HCT116 (cell line): ENCODE measurements at regions of chr16 and their contacts with region 1.

Region 1: DNA sequence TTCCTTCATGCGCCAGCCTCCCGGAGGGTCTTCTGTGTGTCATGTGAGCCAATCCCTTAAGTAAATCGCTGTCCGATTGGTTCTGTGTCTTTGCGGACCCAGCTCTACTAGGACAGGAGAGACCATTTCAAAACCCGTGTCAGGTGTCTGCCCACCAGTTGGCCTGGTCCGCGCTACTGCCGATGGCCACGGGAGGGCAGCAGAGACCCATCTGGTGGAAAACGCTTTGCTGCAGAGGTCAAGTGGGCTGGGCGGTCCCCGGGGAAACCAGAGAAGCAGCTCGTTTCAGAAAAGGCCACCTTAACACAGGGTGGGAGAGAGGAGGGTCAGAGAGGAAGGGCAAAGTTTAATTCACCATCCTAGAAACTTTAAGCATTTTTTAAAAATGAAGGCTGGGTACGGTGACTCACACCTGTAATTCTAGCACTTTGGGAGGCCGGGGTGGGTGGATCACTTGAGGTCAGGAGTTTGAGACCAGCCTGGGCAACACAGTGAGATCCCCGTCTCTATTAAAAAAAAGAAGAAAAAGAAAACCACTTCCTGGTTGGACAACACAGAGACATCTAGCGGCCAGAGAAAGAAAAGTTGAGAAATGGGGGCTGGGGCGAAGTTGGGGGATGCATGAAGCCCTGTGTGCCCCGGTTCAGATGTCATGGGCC is 2.8 kb upstream of the CIBAR2 start:
- DNase-seq: peak; percentile 85
- ATAC-seq: peak; percentile 89
- H3K4me3 ChIP-seq: peak overlapping the region; percentile 23 to 27
- H3K27ac ChIP-seq: peak overlapping the region; percentile 48
- H3K4me1 ChIP-seq: peaks cover 11 to 24% of the 10 kb centered on the region in 2 experiments; a peak in 3 of 4 replicates
- H3K27me3 ChIP-seq: no peaks in the 10 kb centered on the region
- CTCF ChIP-seq: peak; percentile 98 to 100 (median 100)
- POLR2A ChIP-seq: no peak
- RAD21 ChIP-seq: peak; percentile 100

Region 2: GRCh38 chr16:84785843-84786581 is 329.0 kb before region 1 on chr16:
- CTCF ChIA-PET with region 1: no interaction called
- POLR2A ChIA-PET with region 1: no interaction called
- RAD21 ChIA-PET with region 1: no interaction called
- intact Hi-C with region 1: no loop called
- DNase-seq: no peak
- ATAC-seq: no peak
- H3K4me3 ChIP-seq: no peak overlapping the region
- H3K27ac ChIP-seq: no peak overlapping the region
- H3K4me1 ChIP-seq: 0 out of 4 replicates have a peak, but pooled peaks cover 0 to 2% of the 10 kb centered on the region in 2 experiments
- H3K27me3 ChIP-seq: no peaks in the 10 kb centered on the region
- CTCF ChIP-seq: no peak
- POLR2A ChIP-seq: no peak
- RAD21 ChIP-seq: no peak

Region 3: DNA sequence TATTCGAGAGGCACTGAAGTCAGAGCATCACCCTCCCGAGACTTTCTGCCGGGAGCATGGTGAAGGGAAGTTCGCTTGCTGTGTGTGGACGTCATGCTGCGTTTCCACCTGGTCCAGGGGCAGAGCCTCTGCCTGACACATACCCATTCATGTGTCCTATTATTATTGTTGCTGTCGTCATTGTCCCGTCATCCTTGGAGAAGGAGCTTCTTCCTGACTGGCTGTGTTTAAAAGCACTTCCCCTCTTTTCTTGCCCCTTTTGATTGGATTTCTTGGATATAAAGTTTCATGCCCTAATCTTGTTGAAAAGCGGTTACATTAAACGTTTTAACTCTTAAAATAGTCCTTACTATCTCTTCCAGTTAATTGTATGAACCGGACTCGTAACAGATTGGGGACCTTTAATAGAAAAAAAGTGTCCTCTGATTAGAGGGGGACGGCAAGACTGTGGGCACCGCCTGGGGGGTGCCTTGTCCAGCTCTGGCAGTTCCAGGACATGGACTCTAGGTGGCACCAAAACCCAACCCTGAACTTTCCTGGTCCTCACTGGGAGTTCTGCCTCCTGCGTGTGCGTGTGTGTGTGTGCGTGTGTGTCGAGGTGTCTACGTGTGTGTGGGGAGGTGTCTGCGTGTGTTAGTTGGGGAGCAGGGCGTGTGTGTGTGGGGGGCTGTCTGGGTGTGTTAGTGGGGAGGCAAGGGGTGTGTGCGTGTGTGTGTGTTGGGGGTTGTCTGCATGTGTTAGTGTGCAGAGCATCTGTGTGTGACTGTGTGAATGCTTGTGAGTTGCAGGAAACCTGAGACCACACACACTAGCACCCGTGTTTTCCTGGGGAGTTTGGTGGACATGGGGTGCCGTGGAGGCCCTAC is 130.5 kb after region 1 on chr16:
- CTCF ChIA-PET with region 1: interaction called, 8 read pairs
- POLR2A ChIA-PET with region 1: interaction called, 3 read pairs
- RAD21 ChIA-PET with region 1: interaction called in 1 of 2 experiments, 3 read pairs
- intact Hi-C with region 1: loop called (anchors 5 kb)
- DNase-seq: peak; percentile 57
- ATAC-seq: peak; percentile 93
- H3K4me3 ChIP-seq: no peak overlapping the region
- H3K27ac ChIP-seq: no peak overlapping the region
- H3K4me1 ChIP-seq: peaks cover 5 to 20% of the 10 kb centered on the region in 2 experiments; a peak in 3 of 4 replicates
- H3K27me3 ChIP-seq: no peaks in the 10 kb centered on the region
- CTCF ChIP-seq: peak; percentile 84 to 99 (median 97); a peak in 5 of 6 replicates
- POLR2A ChIP-seq: no peak
- RAD21 ChIP-seq: peak; percentile 83

Region 4: DNA sequence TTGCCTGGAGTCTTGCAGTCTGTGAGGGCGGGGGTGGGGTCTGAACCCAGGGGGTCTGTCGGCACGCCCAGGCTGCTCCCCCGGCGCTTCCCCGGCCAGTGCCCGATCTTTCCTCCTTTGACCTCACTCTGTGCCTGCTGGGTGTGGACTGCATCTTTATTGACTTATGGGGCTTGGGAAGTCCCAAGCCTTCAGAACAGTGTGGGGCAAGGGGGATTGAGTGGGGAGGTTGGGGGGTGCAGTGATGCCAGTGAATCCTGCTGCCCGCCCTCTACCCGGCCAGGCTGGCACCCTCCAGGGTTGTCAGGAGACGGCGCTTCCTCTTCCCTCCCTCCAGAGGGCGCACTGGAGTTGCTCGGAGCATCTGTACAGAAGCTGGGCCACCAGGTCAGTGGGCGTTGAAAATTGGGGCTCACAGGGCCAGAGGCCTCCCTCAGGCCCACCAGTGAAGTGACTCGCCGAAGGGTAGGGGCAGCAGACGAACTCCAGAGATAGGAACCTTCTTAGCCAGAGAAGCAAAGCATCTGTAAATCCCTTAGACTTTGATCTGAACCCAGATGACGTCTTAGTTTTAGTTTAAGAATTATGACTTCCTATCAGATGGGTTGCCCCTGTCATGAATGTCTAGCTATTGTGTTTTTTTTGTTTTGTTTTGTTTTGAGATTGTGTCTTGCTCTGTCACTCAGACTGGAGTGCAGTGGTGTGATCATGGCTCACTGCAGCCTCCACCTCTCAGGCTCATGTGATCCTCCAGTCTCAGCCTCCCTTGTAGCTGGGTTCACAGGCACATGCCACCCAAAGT is 182.0 kb after region 1 on chr16:
- CTCF ChIA-PET with region 1: interaction called, 10 read pairs
- POLR2A ChIA-PET with region 1: no interaction called
- RAD21 ChIA-PET with region 1: no interaction called
- intact Hi-C with region 1: loop called (anchors 1 kb)
- DNase-seq: peak; percentile 31
- ATAC-seq: peak; percentile 96
- H3K4me3 ChIP-seq: no peak overlapping the region
- H3K27ac ChIP-seq: no peak overlapping the region
- H3K4me1 ChIP-seq: peaks cover 12 to 24% of the 10 kb centered on the region in 2 experiments
- H3K27me3 ChIP-seq: no peaks in the 10 kb centered on the region
- CTCF ChIP-seq: peak in 2 of 3 experiments; percentile 97; a peak in 4 of 6 replicates
- POLR2A ChIP-seq: no peak
- RAD21 ChIP-seq: no peak

Region 5: GRCh38 chr16:85393674-85394483 is 278.8 kb after region 1 on chr16:
- CTCF ChIA-PET with region 1: interaction called, 11 read pairs
- POLR2A ChIA-PET with region 1: no interaction called
- RAD21 ChIA-PET with region 1: no interaction called
- intact Hi-C with region 1: loop called (anchors 10 kb)
- DNase-seq: no peak
- ATAC-seq: peak; percentile 54
- H3K4me3 ChIP-seq: no peak overlapping the region
- H3K27ac ChIP-seq: no peak overlapping the region; the same call in 1 of the 2 replicates
- H3K4me1 ChIP-seq: peaks cover 58 to 72% of the 10 kb centered on the region in 2 experiments
- H3K27me3 ChIP-seq: no peaks in the 10 kb centered on the region
- CTCF ChIP-seq: peak in 2 of 3 experiments; percentile 100; a peak in 4 of 6 replicates
- POLR2A ChIP-seq: no peak
- RAD21 ChIP-seq: no peak

Region 6: GRCh38 chr16:85610508-85611332 is 495.7 kb after region 1 on chr16:
- CTCF ChIA-PET with region 1: interaction called, 17 read pairs
- POLR2A ChIA-PET with region 1: no interaction called
- RAD21 ChIA-PET with region 1: no interaction called
- intact Hi-C with region 1: loop called (anchors 1 kb)
- DNase-seq: peak; percentile 83
- ATAC-seq: peak; percentile 49
- H3K4me3 ChIP-seq: peak overlapping the region; percentile 85 to 91
- H3K27ac ChIP-seq: peak overlapping the region; percentile 98
- H3K4me1 ChIP-seq: peaks cover 20 to 52% of the 10 kb centered on the region in 2 experiments
- H3K27me3 ChIP-seq: no peaks in the 10 kb centered on the region
- CTCF ChIP-seq: peak in 2 of 3 experiments; percentile 99 to 100; a peak in 4 of 6 replicates
- POLR2A ChIP-seq: no peak
- RAD21 ChIP-seq: no peak